ENCODE measurements at regions of chr11 and their contacts with region 1.

Region 1: DNA sequence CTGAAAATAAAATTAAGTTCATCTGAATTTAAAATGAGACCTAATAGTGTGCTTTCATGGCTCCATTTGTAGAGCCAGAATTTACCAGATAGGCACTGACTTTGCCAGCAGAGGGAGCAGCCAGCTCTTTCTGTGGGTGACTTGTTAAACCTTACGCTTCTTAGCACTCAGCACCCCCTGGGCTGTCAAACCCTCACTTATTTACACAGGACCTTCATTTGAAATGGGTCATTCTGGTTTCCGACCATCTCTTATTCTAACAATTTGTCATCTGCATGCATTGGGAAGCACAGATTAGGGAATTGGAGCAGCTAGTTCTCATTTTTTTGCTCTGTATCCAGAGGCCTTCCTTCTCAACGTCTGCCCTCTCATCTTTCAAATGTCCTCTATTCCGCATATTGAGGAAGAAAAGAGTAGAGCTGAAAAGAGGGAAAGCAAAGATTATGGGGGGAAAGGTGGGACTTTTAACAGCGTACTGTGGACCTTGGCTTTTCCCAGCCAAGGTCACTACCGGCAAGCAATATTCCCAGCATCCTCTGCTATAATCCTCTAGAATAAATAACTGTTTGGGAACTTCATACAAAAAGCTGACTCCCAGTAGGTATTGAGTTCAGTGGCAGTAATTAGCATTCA is 3.1 kb downstream of the ASRGL1 start:
- DNase-seq: peak in 1 of 2 donors; percentile 68
- H3K4me3 ChIP-seq: no peak overlapping the region
- H3K27ac ChIP-seq: no peak overlapping the region
- H3K4me1 ChIP-seq: no peaks in the 10 kb centered on the region
- H3K27me3 ChIP-seq: no peaks in the 10 kb centered on the region
- CTCF ChIP-seq: peak; percentile 49 to 69 (median 51)

Region 2: DNA sequence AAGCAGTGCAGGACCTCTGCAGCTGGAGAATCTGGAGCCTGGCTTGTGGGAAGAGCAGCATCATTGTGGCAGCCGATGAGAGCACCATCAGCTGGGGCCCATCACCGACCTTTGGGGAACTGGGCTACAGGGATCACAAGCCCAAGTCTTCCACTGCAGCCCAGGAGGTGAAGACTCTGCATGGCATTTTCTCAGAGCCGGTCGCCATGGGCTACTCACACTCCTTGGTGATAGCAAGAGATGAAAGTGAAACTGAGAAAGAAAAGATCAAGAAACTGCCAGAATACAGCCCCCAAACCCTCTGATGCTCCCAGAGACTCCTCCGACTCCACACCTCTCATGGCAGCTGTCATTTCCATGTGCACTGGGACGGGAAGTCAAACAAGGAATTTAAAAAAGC is 32.5 kb after region 1 on chr11:
- intact Hi-C with region 1: loop called (anchors 1 kb)
- DNase-seq: no peak
- H3K4me3 ChIP-seq: no peak overlapping the region
- H3K27ac ChIP-seq: no peak overlapping the region
- H3K4me1 ChIP-seq: no peaks in the 10 kb centered on the region
- H3K27me3 ChIP-seq: no peaks in the 10 kb centered on the region
- CTCF ChIP-seq: no peak